ENCODE measurements at regions of chr20 and their contacts with region 1.

Region 1: DNA sequence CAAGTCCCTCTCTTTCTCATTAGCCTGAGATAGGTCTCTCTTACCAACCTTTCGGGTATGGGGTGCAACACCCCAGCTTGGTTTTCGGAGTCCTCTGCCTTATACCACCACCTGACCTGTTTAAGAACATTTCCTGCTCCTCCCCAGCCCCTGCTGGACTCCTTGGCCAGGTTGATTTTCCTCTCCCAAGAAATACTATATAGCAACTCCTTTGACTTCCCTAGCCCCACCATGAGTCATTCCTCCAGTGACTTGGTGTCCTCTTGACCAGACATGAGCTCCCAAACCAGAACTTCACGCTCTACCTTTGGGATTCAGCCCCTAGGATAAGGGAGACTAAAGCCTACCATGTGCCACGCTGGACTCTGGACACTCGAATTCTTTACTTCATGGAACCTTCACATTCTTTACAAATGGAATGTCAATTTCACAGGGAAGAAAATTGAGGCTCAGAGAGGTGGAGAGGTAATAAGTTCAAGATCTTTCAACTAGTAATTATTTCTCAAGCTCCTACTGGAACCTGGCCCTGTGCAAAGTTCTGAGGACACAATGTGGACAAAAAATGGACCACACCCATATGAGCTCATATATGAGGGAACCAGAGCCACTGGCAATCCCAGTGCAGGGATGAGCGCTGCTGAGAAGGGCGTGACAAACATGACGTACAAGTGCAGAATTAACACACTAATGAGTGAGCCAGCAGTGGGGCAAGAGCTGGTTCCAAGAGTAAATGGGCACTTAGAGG is 48.2 kb downstream of the SIRPA start:
- DNase-seq: no peak
- H3K4me3 ChIP-seq: no peak overlapping the region
- H3K27ac ChIP-seq: no peak overlapping the region
- H3K4me1 ChIP-seq: peaks cover 0 to 7% of the 10 kb centered on the region in 2 donors
- H3K27me3 ChIP-seq: no peaks in the 10 kb centered on the region
- CTCF ChIP-seq: no peak
- POLR2A ChIP-seq: no peak

Region 2: DNA sequence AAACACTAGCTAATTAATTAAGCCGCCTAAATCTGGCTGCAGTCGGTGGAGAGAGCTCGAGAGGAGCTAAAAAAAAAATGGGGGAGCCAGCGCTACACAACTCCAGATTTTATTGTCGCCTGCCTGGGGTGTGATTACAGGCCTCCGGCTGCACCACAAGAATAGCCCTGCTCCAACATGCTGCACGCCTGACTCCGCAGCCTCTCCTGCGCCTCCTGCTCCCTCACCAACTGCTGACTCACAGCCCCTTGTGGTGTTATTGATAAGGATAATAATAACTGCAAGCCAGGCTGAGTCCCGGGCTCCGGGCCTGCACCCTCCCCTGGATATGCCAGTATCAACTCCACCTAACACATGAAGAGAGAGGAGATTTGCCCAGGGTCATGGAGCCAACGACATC is 31.4 kb before region 1 on chr20:
- intact Hi-C with region 1: no loop called
- DNase-seq: no peak
- H3K4me3 ChIP-seq: no peak overlapping the region
- H3K27ac ChIP-seq: no peak overlapping the region
- H3K4me1 ChIP-seq: no peaks in the 10 kb centered on the region
- H3K27me3 ChIP-seq: no peaks in the 10 kb centered on the region
- CTCF ChIP-seq: no peak
- POLR2A ChIP-seq: no peak

Region 3: DNA sequence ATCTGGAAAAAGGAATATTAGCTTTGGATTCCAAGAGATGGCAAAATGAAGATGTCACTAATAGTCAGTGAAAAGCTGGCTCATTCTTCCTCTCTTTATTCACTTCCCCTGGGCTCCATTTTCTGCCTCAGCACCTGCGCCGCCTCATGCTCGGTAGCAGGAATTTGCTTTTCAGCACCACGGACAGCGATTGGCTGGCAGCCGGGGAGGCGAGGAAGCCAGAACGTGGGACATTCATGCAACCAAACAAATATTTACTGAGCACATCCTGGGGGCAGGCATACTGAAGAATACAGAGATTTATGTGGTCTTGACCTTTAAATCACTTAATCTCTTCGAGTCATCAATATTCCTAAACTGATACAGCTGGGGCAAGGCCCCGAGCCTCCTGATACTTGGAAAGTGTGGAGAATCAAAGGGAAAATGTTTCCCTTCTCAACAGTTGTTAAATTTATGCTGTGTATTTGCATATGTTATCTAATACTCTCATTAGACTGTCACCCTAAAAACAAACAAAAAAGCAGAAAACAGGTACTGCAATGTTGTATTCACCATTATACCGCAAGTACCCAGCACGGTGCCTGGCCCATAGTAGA is 62.5 kb after region 1 on chr20:
- intact Hi-C with region 1: no loop called
- DNase-seq: peak; percentile 19 to 80
- H3K4me3 ChIP-seq: no peak overlapping the region
- H3K27ac ChIP-seq: no peak overlapping the region
- H3K4me1 ChIP-seq: no peaks in the 10 kb centered on the region
- H3K27me3 ChIP-seq: peaks cover 0 to 25% of the 10 kb centered on the region in 2 donors
- CTCF ChIP-seq: no peak
- POLR2A ChIP-seq: no peak

Region 4: DNA sequence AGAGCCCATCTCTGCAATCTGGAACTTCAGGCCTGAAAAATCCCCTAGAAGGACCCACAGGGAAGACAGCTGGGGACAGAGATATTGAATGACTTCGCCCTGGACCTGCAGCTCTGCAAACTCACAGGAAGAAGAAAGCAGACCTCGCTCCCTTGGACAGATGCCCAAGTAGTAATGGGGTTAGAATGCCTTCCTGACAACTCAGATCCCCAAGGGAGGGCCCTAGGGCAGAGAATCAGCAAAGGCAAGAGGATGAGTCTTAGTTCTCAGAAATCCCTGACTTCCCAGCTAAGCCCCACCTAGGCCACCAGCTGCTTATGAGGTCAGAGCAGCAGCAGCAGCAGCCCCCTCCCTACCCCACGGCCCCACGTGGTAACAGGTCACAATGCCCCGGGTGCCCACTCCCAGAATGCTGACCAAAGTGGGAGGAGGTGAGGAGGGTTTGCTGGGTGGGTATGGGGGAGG is 871.2 kb after region 1 on chr20 and contains the start of gene C20orf141:
- intact Hi-C with region 1: loop called (anchors 5 kb)
- DNase-seq: peak in 1 of 2 donors; percentile 25
- H3K4me3 ChIP-seq: no peak within 1 kb of the TSS
- H3K27ac ChIP-seq: peak within 1 kb of the TSS; percentile 17 to 83
- H3K4me1 ChIP-seq: no peaks in the 10 kb centered on the region
- H3K27me3 ChIP-seq: no peaks in the 10 kb centered on the region
- CTCF ChIP-seq: no peak
- POLR2A ChIP-seq: no peak
- total RNA-seq, gene C20orf141: not detected